Activated CD4-positive, alpha-beta T cell treated with anti-CD3 and anti-CD28 coated beads for 36 hours (primary cell): ENCODE measurements at regions of chr17 and their contacts with region 1.

Region 1: GRCh38 chr17:8991514-8992285 is 26.2 kb upstream of the PIK3R5 start:
- DNase-seq: peak; percentile 85
- ATAC-seq: peak; percentile 83
- H3K4me3 Mint-ChIP-seq: no peak overlapping the region
- H3K27ac Mint-ChIP-seq: no peak overlapping the region
- H3K4me1 Mint-ChIP-seq: peaks cover 6% of the 10 kb centered on the region
- H3K27me3 Mint-ChIP-seq: peaks cover 2% of the 10 kb centered on the region

Region 2: GRCh38 chr17:9109933-9110332 is 118.2 kb after region 1 on chr17:
- CTCF ChIA-PET with region 1: no interaction called
- POLR2A ChIA-PET with region 1: no interaction called
- intact Hi-C with region 1: no loop called
- DNase-seq: no peak
- ATAC-seq: no peak
- H3K4me3 Mint-ChIP-seq: no peak overlapping the region
- H3K27ac Mint-ChIP-seq: no peak overlapping the region
- H3K4me1 Mint-ChIP-seq: peaks cover 2% of the 10 kb centered on the region
- H3K27me3 Mint-ChIP-seq: no peaks in the 10 kb centered on the region

Region 3: DNA sequence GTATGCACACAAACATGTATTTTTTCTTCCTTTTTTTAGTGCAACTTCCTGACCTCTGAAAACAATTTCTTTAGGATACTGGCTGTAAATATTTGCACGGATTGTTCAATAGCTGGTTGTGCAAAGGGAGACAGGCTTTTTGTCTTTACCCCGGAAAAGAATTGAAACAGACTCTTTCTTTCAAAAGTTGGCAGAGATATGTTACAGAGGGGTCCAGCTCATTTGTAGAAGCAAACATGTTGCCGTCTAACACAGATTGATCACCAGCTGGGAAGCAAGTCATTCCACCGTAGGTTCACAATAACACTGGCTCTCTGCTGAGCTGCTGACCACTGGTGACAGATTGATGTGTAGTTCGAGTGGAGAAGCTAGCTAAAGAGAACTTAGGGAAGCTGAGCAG is 453.0 kb after region 1 on chr17:
- CTCF ChIA-PET with region 1: no interaction called
- POLR2A ChIA-PET with region 1: no interaction called
- intact Hi-C with region 1: no loop called
- DNase-seq: no peak
- ATAC-seq: no peak
- H3K4me3 Mint-ChIP-seq: no peak overlapping the region
- H3K27ac Mint-ChIP-seq: no peak overlapping the region
- H3K4me1 Mint-ChIP-seq: no peaks in the 10 kb centered on the region
- H3K27me3 Mint-ChIP-seq: no peaks in the 10 kb centered on the region

Region 4: GRCh38 chr17:9557161-9557755 is 565.6 kb after region 1 on chr17:
- CTCF ChIA-PET with region 1: interaction called, 3 read pairs
- POLR2A ChIA-PET with region 1: no interaction called
- intact Hi-C with region 1: loop called in 1 of 2 experiments (anchors 10 kb)
- DNase-seq: no peak
- ATAC-seq: no peak
- H3K4me3 Mint-ChIP-seq: no peak overlapping the region
- H3K27ac Mint-ChIP-seq: no peak overlapping the region
- H3K4me1 Mint-ChIP-seq: no peaks in the 10 kb centered on the region
- H3K27me3 Mint-ChIP-seq: no peaks in the 10 kb centered on the region